Right ventricle myocardium inferior (tissue), 1 donor: ENCODE measurements at regions of chr10 and their contacts with region 1.

Region 1: GRCh38 chr10:116690356-116691322 is 51.7 kb downstream of the HSPA12A start:
- DNase-seq: peak; percentile 74
- ATAC-seq: peak; percentile 60

Region 2: DNA sequence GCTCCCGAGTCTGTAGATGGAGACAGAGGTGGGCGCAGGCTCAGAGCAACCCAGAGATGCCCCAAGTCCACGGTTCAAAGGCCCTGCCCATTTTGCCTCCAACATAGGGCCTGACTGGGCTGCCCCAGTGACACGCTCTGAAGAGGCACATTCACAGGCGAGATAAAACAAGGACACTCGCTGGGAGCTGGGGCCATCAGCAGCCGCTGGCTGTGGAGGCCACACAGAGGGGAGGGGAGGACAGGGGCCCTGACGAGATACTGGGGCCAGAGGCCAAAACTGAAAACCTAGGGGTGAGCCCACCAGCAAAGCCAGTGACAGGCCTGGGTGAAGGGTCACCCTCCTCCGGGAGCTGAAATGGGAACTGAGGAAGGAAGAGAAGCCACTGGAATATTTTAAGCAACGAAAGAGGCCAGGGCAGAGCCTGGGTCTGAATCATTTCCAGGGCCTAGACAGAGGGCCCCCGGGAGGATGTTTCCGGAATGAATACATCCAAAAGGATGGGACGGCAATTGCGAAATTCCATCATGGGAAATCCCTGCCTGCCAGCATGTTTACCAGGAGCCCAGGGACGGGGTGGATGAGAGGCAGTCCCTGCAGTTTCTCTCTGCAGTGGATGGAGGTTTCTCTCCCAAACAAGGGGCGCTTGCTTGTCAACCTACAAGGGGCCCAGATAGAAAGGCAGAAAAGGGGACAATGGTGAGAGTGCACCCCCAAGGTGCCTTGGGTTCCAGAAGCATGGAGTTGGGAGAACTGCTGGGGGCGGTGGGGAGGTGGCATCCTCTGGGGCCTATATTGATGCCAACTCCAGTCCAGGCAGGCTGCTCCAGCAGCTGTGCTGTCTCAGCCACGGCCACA is 80.7 kb after region 1 on chr10:
- intact Hi-C with region 1: loop called (anchors 5 kb)
- DNase-seq: no peak
- ATAC-seq: peak; percentile 74